Activated B cell treated with CpG ODN at 0.5 μM for 24 hours (primary cell): ENCODE measurements at regions of chr2 and their contacts with region 1.

Region 1: DNA sequence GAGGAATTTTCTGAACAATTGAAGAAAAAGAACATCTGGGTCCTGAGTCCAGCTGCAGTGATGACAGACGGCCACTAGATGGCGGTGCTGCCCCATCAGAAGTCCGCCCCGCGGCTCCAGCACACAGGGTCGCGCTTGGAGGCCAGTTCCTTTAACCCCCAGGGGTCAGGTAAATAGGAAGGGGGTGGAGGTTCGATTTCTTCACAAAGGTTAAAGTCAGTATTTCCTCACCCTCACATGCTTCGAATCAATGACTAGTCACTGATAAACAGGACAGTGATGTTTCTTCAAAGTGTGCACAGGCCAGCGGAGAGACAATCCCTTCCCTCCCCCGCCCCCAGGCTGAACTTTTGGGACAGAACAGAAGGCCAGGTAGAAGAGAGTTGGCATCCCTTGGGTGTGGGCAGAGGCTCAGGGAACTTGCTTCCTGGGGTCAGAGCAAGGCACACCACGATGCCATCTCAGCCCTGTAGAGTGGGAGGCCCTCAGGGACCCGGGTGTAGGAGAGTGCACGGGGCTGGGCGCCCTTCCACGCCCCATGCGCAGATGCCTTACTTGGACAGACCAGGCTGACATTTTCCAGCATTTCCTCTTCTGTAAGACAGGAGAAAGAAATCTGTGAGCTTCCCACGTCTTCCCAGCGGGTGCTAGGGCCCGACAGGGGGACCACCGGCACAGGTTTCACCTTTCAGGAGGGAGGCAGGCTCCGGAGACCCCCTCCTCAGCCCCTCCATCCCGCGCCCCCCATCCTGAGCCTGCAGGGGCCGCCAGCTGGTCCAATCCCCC is 722 bp downstream of the APOB start:
- DNase-seq: peak; percentile 39
- ATAC-seq: peak; percentile 61
- H3K4me3 Mint-ChIP-seq: peak overlapping the region; percentile 35
- H3K27ac Mint-ChIP-seq: no peak overlapping the region
- H3K4me1 Mint-ChIP-seq: peaks cover 3% of the 10 kb centered on the region
- H3K27me3 Mint-ChIP-seq: peaks cover 31% of the 10 kb centered on the region
- CTCF ChIP-seq: peak; percentile 94

Region 2: GRCh38 chr2:20313659-20314058 is 729.5 kb before region 1 on chr2:
- CTCF ChIA-PET with region 1: no interaction called
- POLR2A ChIA-PET with region 1: interaction called, 10 read pairs
- intact Hi-C with region 1: no loop called
- DNase-seq: no peak
- ATAC-seq: no peak
- H3K4me3 Mint-ChIP-seq: no peak overlapping the region
- H3K27ac Mint-ChIP-seq: no peak overlapping the region
- H3K4me1 Mint-ChIP-seq: peaks cover 6% of the 10 kb centered on the region
- H3K27me3 Mint-ChIP-seq: no peaks in the 10 kb centered on the region
- CTCF ChIP-seq: no peak

Region 3: GRCh38 chr2:21118302-21118920 is 75.3 kb after region 1 on chr2:
- CTCF ChIA-PET with region 1: interaction called, 3 read pairs
- POLR2A ChIA-PET with region 1: no interaction called
- intact Hi-C with region 1: loop called (anchors 1 kb)
- DNase-seq: no peak
- ATAC-seq: no peak
- H3K4me3 Mint-ChIP-seq: no peak overlapping the region
- H3K27ac Mint-ChIP-seq: no peak overlapping the region
- H3K4me1 Mint-ChIP-seq: no peaks in the 10 kb centered on the region
- H3K27me3 Mint-ChIP-seq: peaks cover 12% of the 10 kb centered on the region
- CTCF ChIP-seq: no peak

Region 4: GRCh38 chr2:21317131-21317530 is 274.0 kb after region 1 on chr2:
- CTCF ChIA-PET with region 1: interaction called, 5 read pairs
- POLR2A ChIA-PET with region 1: no interaction called
- intact Hi-C with region 1: loop called (anchors 1 kb)
- DNase-seq: no peak
- ATAC-seq: no peak
- H3K4me3 Mint-ChIP-seq: no peak overlapping the region
- H3K27ac Mint-ChIP-seq: no peak overlapping the region
- H3K4me1 Mint-ChIP-seq: no peaks in the 10 kb centered on the region
- H3K27me3 Mint-ChIP-seq: no peaks in the 10 kb centered on the region
- CTCF ChIP-seq: no peak